ENCODE measurements at regions of chr18 and their contacts with region 1.

Region 1: GRCh38 chr18:29351171-29351570 is 1174.2 kb upstream of the CDH2 start:
- DNase-seq: no peak
- H3K4me3 Mint-ChIP-seq: no peak overlapping the region
- H3K27ac Mint-ChIP-seq: no peak overlapping the region
- H3K4me1 Mint-ChIP-seq: peaks cover 2% of the 10 kb centered on the region
- H3K27me3 Mint-ChIP-seq: no peaks in the 10 kb centered on the region
- CTCF ChIP-seq: no peak

Region 2: GRCh38 chr18:29629493-29630042 is 278.4 kb after region 1 on chr18:
- CTCF ChIA-PET with region 1: no interaction called
- intact Hi-C with region 1: loop called (anchors 10 kb)
- DNase-seq: no peak
- H3K4me3 Mint-ChIP-seq: no peak overlapping the region
- H3K27ac Mint-ChIP-seq: no peak overlapping the region
- H3K4me1 Mint-ChIP-seq: no peaks in the 10 kb centered on the region
- H3K27me3 Mint-ChIP-seq: no peaks in the 10 kb centered on the region
- CTCF ChIP-seq: no peak